ENCODE measurements at regions of chr18 and their contacts with region 1.

Region 1: GRCh38 chr18:13134551-13135401 is 83.8 kb upstream of the LDLRAD4 start:
- DNase-seq: no peak
- H3K4me3 ChIP-seq: no peak overlapping the region
- H3K27ac ChIP-seq: no peak overlapping the region
- H3K4me1 ChIP-seq: peaks cover 4 to 30% (median 27%) of the 10 kb centered on the region in 4 experiments
- H3K27me3 ChIP-seq: no peaks in the 10 kb centered on the region

Region 2: GRCh38 chr18:11658989-11659388 is 1475.8 kb before region 1 on chr18:
- CTCF ChIA-PET with region 1: no interaction called
- POLR2A ChIA-PET with region 1: no interaction called
- DNase-seq: no peak
- H3K4me3 ChIP-seq: no peak overlapping the region
- H3K27ac ChIP-seq: no peak overlapping the region
- H3K4me1 ChIP-seq: peaks cover 0 to 6% (median 3%) of the 10 kb centered on the region in 4 experiments
- H3K27me3 ChIP-seq: peaks cover 0 to 17% (median 7%) of the 10 kb centered on the region in 5 experiments

Region 3: GRCh38 chr18:12819322-12819721 is 315.5 kb before region 1 on chr18:
- CTCF ChIA-PET with region 1: no interaction called
- POLR2A ChIA-PET with region 1: no interaction called
- DNase-seq: no peak
- H3K4me3 ChIP-seq: no peak overlapping the region
- H3K27ac ChIP-seq: no peak overlapping the region
- H3K4me1 ChIP-seq: no peaks in the 10 kb centered on the region
- H3K27me3 ChIP-seq: no peaks in the 10 kb centered on the region

Region 4: DNA sequence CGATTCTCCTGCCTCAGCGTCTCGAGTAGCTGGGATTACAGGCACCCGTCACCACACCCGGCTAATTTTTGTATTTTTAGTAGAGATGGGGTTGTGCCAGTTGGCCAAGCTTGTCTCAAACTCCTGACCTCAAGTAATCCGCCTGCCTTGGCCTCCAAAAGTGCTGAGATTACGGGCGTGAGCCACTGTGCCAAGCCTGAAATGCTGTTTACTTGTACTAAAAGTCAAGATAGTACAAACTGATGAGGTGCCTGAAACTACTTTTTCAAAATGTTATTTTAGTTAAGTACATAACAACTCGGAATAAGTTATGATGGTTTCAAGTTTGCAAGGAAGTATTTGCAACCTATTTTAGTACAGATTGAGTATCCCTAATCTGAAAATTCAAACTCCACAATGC is 57.9 kb before region 1 on chr18:
- CTCF ChIA-PET with region 1: no interaction called
- POLR2A ChIA-PET with region 1: no interaction called
- DNase-seq: no peak
- H3K4me3 ChIP-seq: no peak overlapping the region
- H3K27ac ChIP-seq: no peak overlapping the region
- H3K4me1 ChIP-seq: no peaks in the 10 kb centered on the region
- H3K27me3 ChIP-seq: no peaks in the 10 kb centered on the region

Region 5: GRCh38 chr18:13120983-13121441 is 13.8 kb before region 1 on chr18:
- CTCF ChIA-PET with region 1: interaction called, 20 read pairs
- POLR2A ChIA-PET with region 1: interaction called, 8 read pairs
- DNase-seq: no peak
- H3K4me3 ChIP-seq: no peak overlapping the region
- H3K27ac ChIP-seq: no peak overlapping the region
- H3K4me1 ChIP-seq: peaks cover 0 to 16% (median 9%) of the 10 kb centered on the region in 4 experiments
- H3K27me3 ChIP-seq: no peaks in the 10 kb centered on the region